WTC11 (cell line): ENCODE measurements at regions of chr20 and their contacts with region 1.

Region 1: GRCh38 chr20:25129908-25130307 is 48.0 kb upstream of the VSX1 start:
- DNase-seq: no peak
- ATAC-seq: peak; percentile 78
- H3K4me3 Mint-ChIP-seq: no peak overlapping the region
- H3K27ac Mint-ChIP-seq: no peak overlapping the region
- H3K4me1 Mint-ChIP-seq: no peaks in the 10 kb centered on the region
- H3K27me3 Mint-ChIP-seq: no peaks in the 10 kb centered on the region
- CTCF ChIP-seq: 0 out of 2 replicates have a peak, but pooled peaks have one; percentile 9

Region 2: DNA sequence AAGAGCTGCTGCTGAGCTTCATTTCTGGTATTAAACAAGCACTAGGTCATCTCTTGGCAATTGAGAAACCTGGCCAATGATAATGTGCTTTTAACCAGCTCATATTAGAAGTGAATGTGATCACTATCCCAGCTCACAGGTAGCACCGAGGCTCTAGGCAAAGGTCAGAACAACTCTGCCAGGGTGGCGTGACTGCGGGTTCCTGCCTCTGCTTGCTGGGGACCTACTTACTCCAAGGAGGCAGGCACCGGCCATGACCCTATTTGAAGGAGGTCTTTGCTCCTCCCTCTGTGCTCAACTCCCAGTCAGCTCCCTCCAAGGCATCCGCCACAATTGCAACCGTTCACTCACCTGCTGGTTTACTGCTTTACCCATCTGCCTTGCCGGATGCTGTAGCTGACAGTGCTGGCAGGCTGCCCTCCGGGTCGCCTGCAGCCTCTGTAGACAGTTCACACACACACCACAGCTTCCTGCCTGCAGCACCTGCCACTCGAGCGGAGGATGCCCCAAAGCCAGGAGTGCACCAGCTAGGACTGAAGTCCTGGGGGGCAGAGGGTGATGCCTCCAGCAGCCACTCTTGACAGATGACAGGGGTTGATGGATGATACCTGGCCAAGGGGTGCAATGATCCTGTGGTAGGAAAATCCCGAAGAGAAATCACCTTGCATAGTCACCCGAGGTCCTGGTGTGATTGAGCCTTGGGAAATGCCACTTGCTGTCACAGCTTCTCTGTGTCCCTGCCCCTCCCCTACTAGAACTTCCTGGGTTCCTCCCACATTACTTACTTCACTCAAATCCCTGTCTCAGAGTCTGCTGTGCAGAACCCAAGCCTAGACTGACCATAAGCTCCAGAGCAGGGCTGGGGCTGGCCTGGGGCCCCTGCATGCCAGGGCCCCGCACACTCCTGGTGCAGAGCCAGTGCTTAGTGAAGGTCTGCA is 39.1 kb before region 1 on chr20:
- CTCF ChIA-PET with region 1: interaction called, 11 read pairs
- POLR2A ChIA-PET with region 1: no interaction called
- DNase-seq: no peak
- ATAC-seq: no peak
- H3K4me3 Mint-ChIP-seq: no peak overlapping the region
- H3K27ac Mint-ChIP-seq: no peak overlapping the region
- H3K4me1 Mint-ChIP-seq: peaks cover 20% of the 10 kb centered on the region
- H3K27me3 Mint-ChIP-seq: peaks cover 26% of the 10 kb centered on the region
- CTCF ChIP-seq: no peak